ENCODE measurements at regions of chr9 and their contacts with region 1.

Region 1: DNA sequence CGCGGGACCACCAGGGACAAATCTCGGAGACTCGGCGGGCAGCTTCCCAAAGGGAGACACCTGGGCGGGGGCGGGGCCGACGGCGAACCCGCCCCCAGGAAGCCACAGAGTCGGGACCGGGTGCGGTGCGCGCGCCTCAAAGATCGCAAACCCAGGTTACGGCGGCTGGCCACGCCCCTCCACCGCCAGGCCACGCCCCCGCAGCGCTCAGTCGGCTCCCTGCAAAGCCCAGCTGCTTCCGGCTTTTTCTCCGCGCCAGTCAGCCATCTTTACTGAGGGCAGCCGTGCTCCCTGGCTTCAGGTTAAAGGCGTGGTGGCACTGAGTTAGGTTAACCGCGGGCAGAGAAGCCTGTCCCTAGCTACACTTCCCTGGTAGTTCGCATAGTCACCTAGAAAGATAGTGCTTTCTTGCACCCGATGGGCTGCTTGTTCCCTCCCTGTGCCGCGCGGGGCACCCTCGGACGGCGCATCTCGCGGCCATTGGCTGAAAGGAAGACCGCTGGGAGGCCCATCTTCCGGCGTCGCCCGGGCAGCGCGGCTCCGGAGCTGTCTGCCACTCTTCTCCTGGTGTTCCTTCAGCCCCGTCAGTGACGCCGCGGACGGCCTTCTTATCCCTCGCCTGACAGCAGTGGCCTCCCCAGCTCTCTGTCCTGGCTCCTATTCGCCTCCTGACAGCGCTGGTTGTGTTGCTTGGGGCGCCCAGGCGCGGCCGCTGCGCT is at the start of gene TBC1D2:
- DNase-seq: peak; percentile 92 to 97 (median 96)
- H3K4me3 ChIP-seq: peak within 1 kb of the TSS; percentile 62
- H3K27ac ChIP-seq: peak within 1 kb of the TSS; percentile 90 to 94
- H3K4me1 ChIP-seq: peaks cover 8% of the 10 kb centered on the region
- H3K27me3 ChIP-seq: no peaks in the 10 kb centered on the region
- CTCF ChIP-seq: peak in 2 of 3 donors; percentile 33 to 36
- EP300 ChIP-seq: no peak
- POLR2A ChIP-seq: no peak
- total RNA-seq, gene TBC1D2: 3.9 to 11.3 (median 4.7) TPM

Region 2: DNA sequence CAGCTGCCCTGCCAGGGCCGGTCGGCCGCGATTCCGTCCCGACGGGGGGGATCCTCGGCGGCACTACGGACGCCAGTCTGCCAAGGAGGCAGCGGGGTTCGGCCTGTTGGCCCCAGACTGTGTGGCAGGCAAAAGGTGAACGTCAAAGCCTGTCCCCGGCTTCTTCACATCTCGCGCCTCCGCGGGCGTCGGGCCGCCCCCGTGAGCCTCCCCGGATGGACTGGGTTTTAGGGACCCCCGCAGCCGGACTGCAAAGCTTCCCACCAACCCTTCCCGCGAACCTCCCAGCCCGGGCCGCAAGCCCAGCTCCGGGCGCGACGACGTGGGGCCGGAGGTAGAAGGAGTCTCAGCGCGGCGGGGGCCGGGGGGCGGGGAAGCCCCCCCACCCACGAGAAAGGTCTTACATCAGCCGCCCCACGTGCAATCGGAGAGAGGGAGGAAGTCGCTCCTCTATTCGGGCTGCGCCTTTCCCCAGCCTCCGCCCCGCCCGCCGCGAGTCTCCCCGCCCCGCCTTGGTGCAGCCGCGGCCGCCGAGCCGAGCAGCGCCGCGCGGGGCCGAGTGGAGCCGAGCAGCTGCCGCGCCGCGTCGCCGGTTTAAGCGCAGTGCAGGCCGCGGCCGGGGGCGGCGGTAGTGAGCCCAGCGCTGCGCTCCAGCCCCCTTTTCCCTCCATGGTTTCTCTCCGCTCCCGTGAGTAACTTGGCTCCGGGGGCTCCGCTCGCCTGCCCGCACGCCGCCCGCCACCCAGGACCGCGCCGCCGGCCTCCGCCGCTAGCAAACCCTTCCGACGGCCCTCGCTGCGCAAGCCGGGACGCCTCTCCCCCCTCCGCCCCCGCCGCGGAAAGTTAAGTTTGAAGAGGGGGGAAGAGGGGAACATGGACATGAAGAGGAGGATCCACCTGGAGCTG is 272.8 kb before region 1 on chr9 and contains the start of gene ANP32B:
- intact Hi-C with region 1: loop called in 1 of 4 experiments (anchors 5 kb)
- DNase-seq: peak; percentile 83 to 93 (median 89)
- H3K4me3 ChIP-seq: peak within 1 kb of the TSS; percentile 92
- H3K27ac ChIP-seq: peak within 1 kb of the TSS; percentile 93 to 98
- H3K4me1 ChIP-seq: peaks cover 4% of the 10 kb centered on the region
- H3K27me3 ChIP-seq: no peaks in the 10 kb centered on the region
- CTCF ChIP-seq: peak; percentile 89 to 97 (median 95)
- EP300 ChIP-seq: no peak
- POLR2A ChIP-seq: peak; percentile 17
- total RNA-seq, gene ANP32B: 41.4 to 167 (median 137) TPM

Region 3: DNA sequence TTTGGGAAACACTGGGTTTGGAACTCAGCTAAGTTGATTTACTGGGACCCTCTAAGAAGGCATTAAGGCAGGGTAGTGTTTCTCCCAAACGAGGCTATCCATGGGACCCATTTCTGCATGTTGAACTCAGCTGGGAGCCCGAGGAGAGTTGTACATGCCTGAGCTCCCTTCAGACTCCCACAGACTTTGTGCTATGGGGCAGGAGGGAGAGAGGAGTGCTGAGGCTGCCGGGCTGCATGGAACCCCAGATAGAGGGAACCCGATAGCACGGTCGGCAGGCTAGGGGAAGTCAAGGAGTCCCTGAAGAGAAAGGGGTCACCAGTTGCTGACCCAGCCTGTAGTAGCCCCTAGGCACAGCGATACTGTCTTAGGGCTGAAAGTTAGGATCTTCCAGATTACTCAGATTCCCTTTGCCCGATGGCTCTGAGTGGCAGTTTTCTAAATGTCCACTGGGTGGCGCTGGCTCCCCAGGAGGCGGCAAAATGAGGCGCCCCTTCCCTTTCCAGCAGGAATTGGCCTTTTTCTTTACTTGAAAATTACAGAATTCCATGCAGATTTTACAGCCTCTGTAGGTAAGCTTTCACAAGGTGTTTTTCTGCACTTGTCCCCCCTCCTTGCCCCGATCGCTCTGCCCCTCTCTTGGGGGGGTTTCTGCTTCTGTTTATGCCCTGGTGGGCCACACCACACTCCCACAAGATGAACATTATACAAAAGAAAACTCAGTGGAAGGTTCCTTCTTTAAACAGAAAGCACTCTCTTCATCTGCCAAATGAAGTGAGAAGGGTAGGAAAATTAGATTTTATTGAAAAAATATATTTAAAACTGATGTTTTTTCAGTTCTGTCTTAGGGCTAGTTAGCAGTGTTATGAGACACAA is 181.4 kb before region 1 on chr9:
- intact Hi-C with region 1: loop called in 1 of 4 experiments (anchors 10 kb)
- DNase-seq: peak; percentile 33 to 72 (median 60)
- H3K4me3 ChIP-seq: no peak overlapping the region
- H3K27ac ChIP-seq: no peak overlapping the region
- H3K4me1 ChIP-seq: peaks cover 3% of the 10 kb centered on the region
- H3K27me3 ChIP-seq: no peaks in the 10 kb centered on the region
- CTCF ChIP-seq: peak; percentile 38 to 69 (median 42)
- EP300 ChIP-seq: no peak
- POLR2A ChIP-seq: no peak

Region 4: DNA sequence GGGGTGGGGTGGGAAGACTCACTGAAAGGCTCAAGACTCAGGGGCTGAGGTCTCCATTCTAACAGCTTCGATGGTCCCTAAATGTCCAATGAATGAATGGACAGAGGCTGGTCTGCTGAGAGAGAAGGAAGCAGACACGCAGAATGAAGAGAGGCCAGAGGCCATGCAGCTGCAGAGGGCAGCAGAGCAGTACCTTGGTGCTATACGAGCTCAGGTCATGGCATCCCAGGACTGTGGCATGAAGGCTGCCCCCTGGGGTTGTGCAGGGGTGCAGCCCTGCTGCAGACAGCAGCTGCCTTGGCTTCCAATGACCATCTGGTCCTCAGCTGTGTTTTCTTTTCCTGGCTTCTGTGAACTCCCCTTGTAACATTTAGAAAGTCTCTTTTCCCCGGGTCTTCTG is 48.1 kb before region 1 on chr9:
- intact Hi-C with region 1: loop called in 3 of 4 experiments (anchors 2 to 10 kb)
- DNase-seq: no peak
- H3K4me3 ChIP-seq: no peak overlapping the region
- H3K27ac ChIP-seq: no peak overlapping the region
- H3K4me1 ChIP-seq: no peaks in the 10 kb centered on the region
- H3K27me3 ChIP-seq: no peaks in the 10 kb centered on the region
- CTCF ChIP-seq: no peak
- EP300 ChIP-seq: no peak
- POLR2A ChIP-seq: no peak

Measured in ovary (tissue), 10 donors.